Activated CD4-positive, alpha-beta memory T cell treated with anti-CD3 and anti-CD28 coated beads, Interleukin-2, amount 10 ng/mL, durations not matched to agents 7 days and 5 days (primary cell): ENCODE measurements at regions of chr14 and their contacts with region 1.

Region 1: DNA sequence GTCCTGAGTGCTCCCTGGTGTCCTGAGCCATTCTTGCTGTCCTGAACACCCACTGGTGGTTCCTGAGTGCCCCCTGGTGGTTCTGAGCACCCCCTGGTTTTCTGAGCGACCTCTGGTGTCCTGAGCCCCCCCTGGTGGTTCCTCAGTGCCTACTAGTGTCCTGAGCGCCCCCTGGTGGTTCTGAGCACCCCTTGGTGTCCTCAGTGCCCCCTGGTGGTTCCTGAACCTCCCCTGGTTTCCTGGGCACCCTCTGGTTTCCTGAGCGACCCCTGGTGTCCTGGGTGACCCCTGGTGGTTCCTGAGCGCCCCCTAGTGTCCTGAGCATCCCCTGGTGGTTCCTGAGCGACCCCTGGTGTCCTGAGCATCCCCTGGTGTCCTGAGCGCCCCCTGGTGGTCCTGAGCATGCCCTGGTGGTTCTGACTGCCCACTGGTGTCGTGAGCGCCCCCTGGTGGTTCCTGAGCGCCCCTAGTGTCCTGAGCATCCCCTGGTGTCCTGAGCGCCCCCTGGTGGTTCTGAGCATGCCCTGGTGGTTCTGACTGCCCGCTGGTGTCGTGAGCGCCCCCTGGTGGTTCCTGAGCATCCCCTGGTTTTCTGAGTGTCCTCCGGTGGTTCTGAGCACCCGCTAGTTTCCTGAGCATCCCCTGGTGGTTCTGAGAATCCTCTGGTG is 473.1 kb downstream of the TMEM121 start:
- DNase-seq: peak; percentile 86
- H3K4me3 Mint-ChIP-seq: peak overlapping the region; percentile 65
- H3K27ac Mint-ChIP-seq: peak overlapping the region; percentile 78
- H3K4me1 Mint-ChIP-seq: peaks cover 52% of the 10 kb centered on the region
- H3K27me3 Mint-ChIP-seq: no peaks in the 10 kb centered on the region

Region 2: GRCh38 chr14:105857826-105858687 is 141.4 kb before region 1 on chr14:
- CTCF ChIA-PET with region 1: interaction called, 13 read pairs
- POLR2A ChIA-PET with region 1: interaction called, 6 read pairs
- DNase-seq: peak; percentile 79
- H3K4me3 Mint-ChIP-seq: peak overlapping the region; percentile 74
- H3K27ac Mint-ChIP-seq: peak overlapping the region; percentile 98
- H3K4me1 Mint-ChIP-seq: peaks cover 77% of the 10 kb centered on the region
- H3K27me3 Mint-ChIP-seq: peaks cover 2% of the 10 kb centered on the region

Region 3: GRCh38 chr14:106120101-106120500 is 120.6 kb after region 1 on chr14:
- CTCF ChIA-PET with region 1: no interaction called
- POLR2A ChIA-PET with region 1: no interaction called
- DNase-seq: no peak
- H3K4me3 Mint-ChIP-seq: no peak overlapping the region
- H3K27ac Mint-ChIP-seq: no peak overlapping the region
- H3K4me1 Mint-ChIP-seq: peaks cover 15% of the 10 kb centered on the region
- H3K27me3 Mint-ChIP-seq: peaks cover 52% of the 10 kb centered on the region